ENCODE measurements at regions of chr9 and their contacts with region 1.

Region 1: GRCh38 chr9:124537926-124538325 is 30.7 kb upstream of the NR5A1 start:
- DNase-seq: no peak
- ATAC-seq: no peak

Region 2: GRCh38 chr9:124420991-124421543 is 116.9 kb before region 1 on chr9:
- intact Hi-C with region 1: loop called (anchors 5 kb)
- DNase-seq: peak; percentile 40
- ATAC-seq: peak; percentile 37

Measured in left ventricle myocardium superior (tissue), 1 donor.